ENCODE measurements at regions of chr9 and their contacts with region 1.

Region 1: DNA sequence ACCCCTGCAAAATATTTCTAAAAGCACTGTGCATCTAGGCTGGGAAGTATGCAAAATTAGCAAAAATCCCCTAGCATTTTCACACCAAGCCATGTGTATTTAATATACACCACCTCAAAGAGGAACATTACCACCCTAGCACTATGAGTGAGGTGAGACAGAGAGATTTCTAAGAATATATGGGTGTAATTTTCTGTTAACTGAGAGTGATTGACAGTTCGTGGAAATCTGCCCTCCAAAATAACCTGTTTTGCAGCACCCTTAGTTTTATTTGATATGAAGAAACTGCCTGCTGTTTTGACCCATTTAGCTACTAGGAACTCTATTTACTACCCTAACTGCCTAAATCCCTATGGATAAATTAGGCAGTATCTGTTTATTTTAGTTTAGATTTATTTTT is 64.2 kb upstream of the CDKN2B start:
- DNase-seq: no peak
- H3K4me3 Mint-ChIP-seq: no peak overlapping the region
- H3K27ac Mint-ChIP-seq: no peak overlapping the region
- H3K4me1 Mint-ChIP-seq: peaks cover 32% of the 10 kb centered on the region
- H3K27me3 Mint-ChIP-seq: peaks cover 19% of the 10 kb centered on the region

Region 2: DNA sequence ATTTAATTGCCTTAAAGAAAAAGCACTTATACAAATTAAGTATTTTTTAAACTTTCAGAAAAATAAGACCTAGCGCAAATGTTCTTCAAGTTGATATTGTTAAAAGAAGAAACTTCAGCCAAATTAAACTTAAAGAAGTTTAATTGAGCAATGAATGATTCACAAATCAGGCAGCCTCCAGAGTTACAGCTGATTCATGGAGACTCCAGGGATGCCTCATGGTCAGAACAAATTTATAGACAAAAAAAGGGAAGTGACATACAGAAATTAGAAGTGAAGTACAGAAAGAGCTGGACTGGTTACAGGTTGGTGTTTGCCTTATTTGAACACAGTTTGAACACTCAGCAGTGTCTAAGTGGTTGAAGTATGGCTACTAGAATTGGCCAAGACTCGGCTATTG is 139.5 kb before region 1 on chr9:
- CTCF ChIA-PET with region 1: no interaction called
- POLR2A ChIA-PET with region 1: no interaction called
- intact Hi-C with region 1: no loop called
- DNase-seq: no peak
- H3K4me3 Mint-ChIP-seq: no peak overlapping the region
- H3K27ac Mint-ChIP-seq: no peak overlapping the region
- H3K4me1 Mint-ChIP-seq: no peaks in the 10 kb centered on the region
- H3K27me3 Mint-ChIP-seq: no peaks in the 10 kb centered on the region

Region 3: GRCh38 chr9:22052376-22052945 is 20.9 kb before region 1 on chr9:
- CTCF ChIA-PET with region 1: interaction called, 5 read pairs
- POLR2A ChIA-PET with region 1: no interaction called
- intact Hi-C with region 1: loop called (anchors 1 kb)
- DNase-seq: peak; percentile 50
- H3K4me3 Mint-ChIP-seq: no peak overlapping the region
- H3K27ac Mint-ChIP-seq: no peak overlapping the region
- H3K4me1 Mint-ChIP-seq: peaks cover 26% of the 10 kb centered on the region
- H3K27me3 Mint-ChIP-seq: peaks cover 12% of the 10 kb centered on the region

Region 4: GRCh38 chr9:22278426-22278825 is 205.1 kb after region 1 on chr9:
- CTCF ChIA-PET with region 1: no interaction called
- POLR2A ChIA-PET with region 1: no interaction called
- intact Hi-C with region 1: no loop called
- DNase-seq: no peak
- H3K4me3 Mint-ChIP-seq: no peak overlapping the region
- H3K27ac Mint-ChIP-seq: no peak overlapping the region
- H3K4me1 Mint-ChIP-seq: no peaks in the 10 kb centered on the region
- H3K27me3 Mint-ChIP-seq: peaks cover 2% of the 10 kb centered on the region

Region 5: DNA sequence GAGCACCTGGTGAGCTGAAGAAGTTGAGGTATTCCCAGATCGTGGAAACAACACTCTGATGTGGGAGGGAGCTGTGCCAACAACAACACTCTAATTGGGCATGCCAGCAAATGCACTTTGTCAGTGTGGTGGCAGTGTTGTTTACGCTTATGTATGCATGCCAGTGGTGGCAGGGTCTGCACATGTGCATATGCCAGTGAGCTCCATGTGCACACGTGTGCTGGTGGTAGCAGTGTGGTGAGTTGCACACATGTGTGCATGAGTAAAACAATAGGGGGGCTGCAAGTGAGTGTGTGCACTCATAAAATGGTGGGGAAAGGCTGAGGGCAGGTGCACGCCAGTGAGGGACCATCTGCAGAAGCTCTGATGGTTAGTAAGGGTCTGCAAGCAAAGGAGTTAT is 507.4 kb after region 1 on chr9:
- CTCF ChIA-PET with region 1: no interaction called
- POLR2A ChIA-PET with region 1: no interaction called
- intact Hi-C with region 1: no loop called
- DNase-seq: no peak
- H3K4me3 Mint-ChIP-seq: no peak overlapping the region
- H3K27ac Mint-ChIP-seq: no peak overlapping the region
- H3K4me1 Mint-ChIP-seq: no peaks in the 10 kb centered on the region
- H3K27me3 Mint-ChIP-seq: no peaks in the 10 kb centered on the region

Measured in activated CD4-positive, alpha-beta memory T cell treated with anti-CD3 and anti-CD28 coated beads for 36 hours (primary cell).